CD8-positive, alpha-beta T cell (primary cell): ENCODE measurements at regions of chr16 and their contacts with region 1.

Region 1: GRCh38 chr16:22353191-22353919 is 21.1 kb downstream of the CDR2 start:
- DNase-seq: peak in 4 of 9 experiments; percentile 21 to 69 (median 36)
- ATAC-seq: peak; percentile 30
- H3K4me3 ChIP-seq: no peak overlapping the region
- H3K4me3 Mint-ChIP-seq: peak overlapping the region; percentile 19
- H3K27ac ChIP-seq: peak overlapping the region in 1 of 2 experiments; percentile 51
- H3K27ac Mint-ChIP-seq: peak overlapping the region; percentile 89
- H3K4me1 ChIP-seq: peaks cover 55% of the 10 kb centered on the region
- H3K4me1 Mint-ChIP-seq: peaks cover 59% of the 10 kb centered on the region
- H3K27me3 ChIP-seq: no peaks in the 10 kb centered on the region
- H3K27me3 Mint-ChIP-seq: no peaks in the 10 kb centered on the region
- CTCF ChIP-seq: no peak

Region 2: GRCh38 chr16:22321339-22322001 is 31.9 kb before region 1 on chr16:
- CTCF ChIA-PET with region 1: interaction called, 5 read pairs
- POLR2A ChIA-PET with region 1: no interaction called
- intact Hi-C with region 1: loop called in 1 of 2 experiments (anchors 2 kb)
- DNase-seq: peak; percentile 44 to 84 (median 72)
- ATAC-seq: peak; percentile 77
- H3K4me3 ChIP-seq: no peak overlapping the region
- H3K4me3 Mint-ChIP-seq: no peak overlapping the region
- H3K27ac ChIP-seq: no peak overlapping the region
- H3K27ac Mint-ChIP-seq: peak overlapping the region; percentile 70
- H3K4me1 ChIP-seq: peaks cover 6% of the 10 kb centered on the region
- H3K4me1 Mint-ChIP-seq: peaks cover 9% of the 10 kb centered on the region
- H3K27me3 ChIP-seq: no peaks in the 10 kb centered on the region
- H3K27me3 Mint-ChIP-seq: no peaks in the 10 kb centered on the region
- CTCF ChIP-seq: peak; percentile 92

Region 3: DNA sequence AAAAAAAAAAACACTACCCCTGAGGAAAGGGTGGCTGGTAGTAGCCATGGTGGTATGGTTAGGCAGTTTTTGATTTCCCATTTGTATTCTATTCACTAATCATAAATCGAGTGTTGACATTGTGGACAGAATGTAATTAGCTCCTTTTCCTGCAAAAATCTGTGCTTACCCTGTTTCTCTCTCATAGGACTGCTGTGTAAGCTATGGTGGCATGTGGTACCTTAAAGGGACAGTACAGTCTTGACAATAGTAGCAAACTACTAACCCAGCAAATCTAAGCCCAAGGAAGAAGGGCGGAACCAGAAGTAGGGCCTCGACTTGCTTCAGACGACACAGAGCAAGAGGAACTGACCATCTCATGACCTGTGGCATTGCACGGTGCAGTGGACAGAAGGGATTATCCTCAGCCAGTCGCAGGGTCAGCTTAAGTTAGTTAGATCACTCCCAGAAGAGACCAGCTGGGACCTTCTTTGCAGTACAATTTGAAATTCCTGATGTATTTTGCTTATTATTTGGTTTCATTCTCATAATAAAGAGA is 19.8 kb before region 1 on chr16:
- CTCF ChIA-PET with region 1: interaction called, 3 read pairs
- POLR2A ChIA-PET with region 1: interaction called, 3 read pairs
- intact Hi-C with region 1: loop called (anchors 2 kb)
- DNase-seq: no peak
- ATAC-seq: no peak
- H3K4me3 ChIP-seq: no peak overlapping the region
- H3K4me3 Mint-ChIP-seq: no peak overlapping the region
- H3K27ac ChIP-seq: no peak overlapping the region
- H3K27ac Mint-ChIP-seq: peak overlapping the region; percentile 27
- H3K4me1 ChIP-seq: no peaks in the 10 kb centered on the region
- H3K4me1 Mint-ChIP-seq: peaks cover 26% of the 10 kb centered on the region
- H3K27me3 ChIP-seq: no peaks in the 10 kb centered on the region
- H3K27me3 Mint-ChIP-seq: no peaks in the 10 kb centered on the region
- CTCF ChIP-seq: no peak

Region 4: DNA sequence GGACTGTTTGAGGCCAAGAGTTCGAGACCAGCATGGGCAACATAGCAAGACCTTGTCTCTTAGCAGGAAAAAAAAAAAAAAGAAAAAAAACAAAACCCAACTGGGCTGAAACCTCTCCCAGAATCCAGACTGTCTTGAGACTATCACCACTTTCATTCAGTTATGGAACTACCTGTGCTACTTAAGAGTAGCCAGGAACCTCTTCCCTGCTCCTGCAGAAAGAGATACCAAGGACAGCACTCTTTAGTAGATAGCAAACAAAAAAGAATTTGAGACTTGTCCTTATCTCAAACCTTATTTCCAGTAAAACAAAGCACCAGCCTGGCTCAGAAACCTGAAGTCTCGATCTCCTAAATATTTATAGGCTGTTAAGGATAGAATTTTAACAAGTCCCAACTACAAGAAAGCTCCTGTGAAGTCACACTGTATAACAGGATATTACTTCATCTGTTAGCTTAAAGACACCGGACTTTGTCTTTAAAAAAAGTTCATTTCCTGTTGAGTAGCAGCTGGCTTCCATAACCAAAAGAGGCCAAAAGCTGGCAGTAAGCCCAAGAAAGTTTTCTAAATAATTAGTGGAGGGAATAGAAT is 16.0 kb after region 1 on chr16:
- CTCF ChIA-PET with region 1: interaction called, 17 read pairs
- POLR2A ChIA-PET with region 1: interaction called, 75 read pairs
- intact Hi-C with region 1: loop called (anchors 1 kb)
- DNase-seq: peak in 2 of 9 experiments; percentile 32 to 62
- ATAC-seq: no peak
- H3K4me3 ChIP-seq: no peak overlapping the region
- H3K4me3 Mint-ChIP-seq: peak overlapping the region; percentile 27
- H3K27ac ChIP-seq: peak overlapping the region; percentile 9 to 39
- H3K27ac Mint-ChIP-seq: peak overlapping the region; percentile 81
- H3K4me1 ChIP-seq: peaks cover 71% of the 10 kb centered on the region
- H3K4me1 Mint-ChIP-seq: peaks cover 86% of the 10 kb centered on the region
- H3K27me3 ChIP-seq: no peaks in the 10 kb centered on the region
- H3K27me3 Mint-ChIP-seq: no peaks in the 10 kb centered on the region
- CTCF ChIP-seq: no peak

Region 5: GRCh38 chr16:22374311-22375116 is 21.2 kb after region 1 on chr16 and contains the start of gene CDR2:
- CTCF ChIA-PET with region 1: interaction called, 17 read pairs
- POLR2A ChIA-PET with region 1: interaction called, 75 read pairs
- intact Hi-C with region 1: loop called (anchors 1 kb)
- DNase-seq: peak; percentile 96 to 99 (median 98)
- ATAC-seq: peak; percentile 92
- H3K4me3 ChIP-seq: peak within 1 kb of the TSS; percentile 60 to 71
- H3K4me3 Mint-ChIP-seq: peak within 1 kb of the TSS; percentile 97
- H3K27ac ChIP-seq: peak within 1 kb of the TSS; percentile 51 to 77
- H3K27ac Mint-ChIP-seq: peak within 1 kb of the TSS; percentile 95
- H3K4me1 ChIP-seq: peaks cover 34% of the 10 kb centered on the region
- H3K4me1 Mint-ChIP-seq: peaks cover 49% of the 10 kb centered on the region
- H3K27me3 ChIP-seq: no peaks in the 10 kb centered on the region
- H3K27me3 Mint-ChIP-seq: no peaks in the 10 kb centered on the region
- CTCF ChIP-seq: no peak
- total RNA-seq, gene CDR2: 119 to 120 TPM

Region 6: GRCh38 chr16:22386976-22387375 is 33.6 kb after region 1 on chr16:
- CTCF ChIA-PET with region 1: no interaction called
- POLR2A ChIA-PET with region 1: interaction called, 3 read pairs
- intact Hi-C with region 1: loop called in 1 of 2 experiments (anchors 5 kb)
- DNase-seq: no peak
- ATAC-seq: no peak
- H3K4me3 ChIP-seq: no peak overlapping the region
- H3K4me3 Mint-ChIP-seq: no peak overlapping the region
- H3K27ac ChIP-seq: no peak overlapping the region
- H3K27ac Mint-ChIP-seq: no peak overlapping the region
- H3K4me1 ChIP-seq: peaks cover 4% of the 10 kb centered on the region
- H3K4me1 Mint-ChIP-seq: peaks cover 4% of the 10 kb centered on the region
- H3K27me3 ChIP-seq: no peaks in the 10 kb centered on the region
- H3K27me3 Mint-ChIP-seq: no peaks in the 10 kb centered on the region
- CTCF ChIP-seq: no peak